ENCODE measurements at regions of chr1 and their contacts with region 1.

Region 1: GRCh38 chr1:202009326-202010179 is 834 bp upstream of the ELF3 start:
- DNase-seq: peak; percentile 81 to 87
- H3K4me3 ChIP-seq: peak overlapping the region in 2 of 3 donors; percentile 67 to 71
- H3K27ac ChIP-seq: peak overlapping the region; percentile 92 to 96
- H3K4me1 ChIP-seq: peaks cover 0 to 12% of the 10 kb centered on the region in 2 donors
- H3K27me3 ChIP-seq: no peaks in the 10 kb centered on the region
- CTCF ChIP-seq: peak; percentile 91 to 98 (median 97)
- POLR2A ChIP-seq: no peak

Region 2: GRCh38 chr1:201982623-201983379 is 26.8 kb before region 1 on chr1 and contains the start of gene RNPEP:
- intact Hi-C with region 1: no loop called
- DNase-seq: peak; percentile 53 to 66
- H3K4me3 ChIP-seq: peak within 1 kb of the TSS; percentile 95 to 96 (median 95)
- H3K27ac ChIP-seq: peak within 1 kb of the TSS; percentile 77 to 93
- H3K4me1 ChIP-seq: no peaks in the 10 kb centered on the region
- H3K27me3 ChIP-seq: no peaks in the 10 kb centered on the region
- CTCF ChIP-seq: no peak
- POLR2A ChIP-seq: no peak
- total RNA-seq, gene RNPEP: 43.0 to 66.7 (median 57.4) TPM

Region 3: DNA sequence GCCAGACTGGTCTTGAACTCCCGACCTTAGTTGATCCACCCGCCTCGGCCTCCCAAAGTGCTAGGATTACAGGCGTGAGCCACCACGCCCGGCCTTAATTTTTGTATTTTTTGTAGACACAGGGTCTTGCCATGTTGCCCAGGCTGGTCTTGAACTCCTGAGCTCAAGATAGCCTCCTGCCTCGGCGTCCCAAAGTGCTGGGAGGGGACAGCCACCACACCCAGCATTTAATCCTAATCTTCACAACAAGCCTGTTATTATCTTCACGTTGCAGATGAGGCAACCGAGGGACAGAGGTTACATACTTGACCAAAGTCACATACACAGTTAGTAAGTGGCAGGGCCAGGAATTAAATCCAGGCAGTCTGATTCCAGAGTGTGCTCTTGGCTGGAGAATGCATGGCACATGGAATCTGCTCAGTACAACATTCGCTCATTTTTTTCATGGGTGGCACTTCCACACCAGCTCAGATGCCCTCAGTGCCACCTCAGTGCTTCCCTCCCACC is 108.4 kb after region 1 on chr1:
- intact Hi-C with region 1: loop called (anchors 5 kb)
- DNase-seq: no peak
- H3K4me3 ChIP-seq: no peak overlapping the region
- H3K27ac ChIP-seq: peak overlapping the region in 1 of 2 donors; percentile 37
- H3K4me1 ChIP-seq: peaks cover 0 to 9% of the 10 kb centered on the region in 2 donors
- H3K27me3 ChIP-seq: no peaks in the 10 kb centered on the region
- CTCF ChIP-seq: no peak
- POLR2A ChIP-seq: no peak

Region 4: DNA sequence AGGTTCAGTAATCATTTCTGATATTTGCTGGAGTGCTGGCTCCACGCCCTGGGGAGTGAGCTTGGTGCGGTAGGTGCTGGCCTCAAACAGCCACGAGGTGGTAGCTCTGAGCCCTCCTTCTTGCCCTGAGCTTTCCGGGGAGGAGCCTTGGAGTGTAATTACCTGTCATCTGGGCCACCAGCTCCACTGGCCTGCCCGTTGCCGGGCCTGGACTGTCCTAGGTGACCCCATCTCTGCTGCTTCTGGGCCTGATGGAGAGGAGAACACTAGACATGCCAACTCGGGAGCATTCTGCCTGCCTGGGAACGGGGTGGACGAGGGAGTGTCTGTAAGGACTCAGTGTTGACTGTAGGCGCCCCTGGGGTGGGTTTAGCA is 1157.0 kb after region 1 on chr1:
- intact Hi-C with region 1: no loop called
- DNase-seq: no peak
- H3K4me3 ChIP-seq: no peak overlapping the region
- H3K27ac ChIP-seq: no peak overlapping the region
- H3K4me1 ChIP-seq: no peaks in the 10 kb centered on the region
- H3K27me3 ChIP-seq: no peaks in the 10 kb centered on the region
- CTCF ChIP-seq: no peak
- POLR2A ChIP-seq: no peak

Measured in breast epithelium (tissue), 4 donors.